K562 (cell line): ENCODE measurements at regions of chr1 and their contacts with region 1.

Region 1: GRCh38 chr1:84433258-84434080 is 35.2 kb downstream of the DNASE2B start:
- DNase-seq: peak; percentile 40 to 72 (median 48)
- ATAC-seq: peak; percentile 74; the same call in 2 of the 3 replicates
- H3K4me3 ChIP-seq: no peak overlapping the region
- H3K27ac ChIP-seq: no peak overlapping the region
- H3K4me1 ChIP-seq: no peaks in the 10 kb centered on the region
- H3K27me3 ChIP-seq: no peaks in the 10 kb centered on the region
- CTCF ChIP-seq: peak; percentile 53 to 78 (median 68); a peak in 5 of 6 replicates
- EP300 ChIP-seq: no peak
- POLR2A ChIP-seq: no peak
- RAD21 ChIP-seq: peak; percentile 90 to 94

Region 2: DNA sequence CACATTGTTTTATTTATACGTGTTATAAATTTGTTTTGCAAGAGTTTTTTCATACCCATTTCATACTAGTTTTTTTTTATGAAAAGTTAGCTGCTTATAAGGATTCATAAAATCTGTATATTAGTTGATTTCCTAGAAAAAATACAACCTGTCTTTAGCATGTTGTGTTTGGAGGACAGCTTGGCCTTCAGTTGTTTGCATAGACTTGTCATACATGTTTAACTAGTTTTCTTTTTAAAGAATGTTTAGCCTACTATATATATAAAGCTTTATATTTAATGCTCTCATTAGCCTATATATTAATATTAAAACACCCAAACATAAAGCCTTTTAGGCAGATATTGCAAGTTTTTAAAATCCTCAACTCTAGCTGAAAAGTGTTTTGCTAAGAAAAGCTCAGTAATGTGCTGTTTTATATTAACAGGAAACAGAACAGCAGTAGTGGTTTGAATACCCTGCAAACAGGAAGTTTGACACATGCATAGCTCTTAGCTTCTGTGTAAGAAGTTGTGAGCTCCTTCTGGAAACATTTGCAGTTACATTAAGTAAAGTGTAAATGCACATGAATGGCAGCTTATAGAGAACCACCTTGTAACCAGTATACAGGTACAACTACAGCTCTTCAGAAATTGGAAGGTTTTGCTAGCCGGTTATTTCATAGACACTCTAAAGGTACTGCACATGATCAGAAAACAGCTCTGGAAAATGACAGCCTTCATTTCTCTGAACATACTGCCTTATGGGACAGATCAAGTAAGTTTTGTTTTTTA is 289.5 kb before region 1 on chr1 and contains the start of gene PRKACB:
- CTCF ChIA-PET with region 1: interaction called, 12 read pairs
- POLR2A ChIA-PET with region 1: no interaction called
- in situ Hi-C with region 1: no loop called
- intact Hi-C with region 1: loop called (anchors 5 kb)
- DNase-seq: no peak
- ATAC-seq: no peak
- H3K4me3 ChIP-seq: no peak within 1 kb of the TSS
- H3K27ac ChIP-seq: no peak within 1 kb of the TSS
- H3K4me1 ChIP-seq: no peaks in the 10 kb centered on the region
- H3K27me3 ChIP-seq: no peaks in the 10 kb centered on the region
- CTCF ChIP-seq: no peak
- EP300 ChIP-seq: no peak
- POLR2A ChIP-seq: no peak
- RAD21 ChIP-seq: no peak
- polyA plus RNA-seq, gene PRKACB: 1.1 to 1.5 TPM

Region 3: DNA sequence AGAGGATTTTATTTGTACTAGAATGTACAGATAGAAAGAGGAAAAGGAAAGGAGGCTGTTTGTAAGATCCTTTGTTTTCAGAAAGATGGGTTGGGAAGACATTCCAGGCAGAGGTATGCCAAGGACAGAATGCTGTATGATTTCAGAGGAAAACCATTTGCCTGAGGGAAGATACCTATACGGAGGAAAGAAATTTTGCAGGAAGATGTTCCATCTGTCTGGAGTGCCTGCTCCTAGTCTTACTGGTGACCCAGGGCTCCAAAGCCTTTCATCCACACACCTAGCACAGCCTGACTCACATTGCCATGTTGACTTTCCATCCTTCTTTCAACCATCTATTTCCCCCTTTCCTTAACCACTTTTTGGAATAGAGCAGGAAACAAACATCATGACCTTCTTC is 113.8 kb before region 1 on chr1:
- CTCF ChIA-PET with region 1: no interaction called
- POLR2A ChIA-PET with region 1: no interaction called
- in situ Hi-C with region 1: no loop called
- intact Hi-C with region 1: no loop called
- DNase-seq: no peak
- ATAC-seq: no peak
- H3K4me3 ChIP-seq: no peak overlapping the region
- H3K27ac ChIP-seq: no peak overlapping the region
- H3K4me1 ChIP-seq: no peaks in the 10 kb centered on the region
- H3K27me3 ChIP-seq: no peaks in the 10 kb centered on the region; a peak in 1 of 5 replicates
- CTCF ChIP-seq: no peak
- EP300 ChIP-seq: no peak
- POLR2A ChIP-seq: no peak
- RAD21 ChIP-seq: no peak